OCI-LY7 (cell line): ENCODE measurements at regions of chr5 and their contacts with region 1.

Region 1: GRCh38 chr5:180470966-180471582 is 23.1 kb upstream of the CNOT6 start:
- DNase-seq: peak; percentile 62
- H3K4me3 ChIP-seq: no peak overlapping the region
- H3K27ac ChIP-seq: no peak overlapping the region
- H3K4me1 ChIP-seq: no peaks in the 10 kb centered on the region
- CTCF ChIP-seq: peak; percentile 94

Region 2: GRCh38 chr5:180201051-180201987 is 269.8 kb before region 1 on chr5:
- CTCF ChIA-PET with region 1: no interaction called
- POLR2A ChIA-PET with region 1: no interaction called
- intact Hi-C with region 1: loop called (anchors 5 kb)
- DNase-seq: peak; percentile 22
- H3K4me3 ChIP-seq: no peak overlapping the region
- H3K27ac ChIP-seq: no peak overlapping the region
- H3K4me1 ChIP-seq: no peaks in the 10 kb centered on the region
- CTCF ChIP-seq: peak; percentile 74

Region 3: DNA sequence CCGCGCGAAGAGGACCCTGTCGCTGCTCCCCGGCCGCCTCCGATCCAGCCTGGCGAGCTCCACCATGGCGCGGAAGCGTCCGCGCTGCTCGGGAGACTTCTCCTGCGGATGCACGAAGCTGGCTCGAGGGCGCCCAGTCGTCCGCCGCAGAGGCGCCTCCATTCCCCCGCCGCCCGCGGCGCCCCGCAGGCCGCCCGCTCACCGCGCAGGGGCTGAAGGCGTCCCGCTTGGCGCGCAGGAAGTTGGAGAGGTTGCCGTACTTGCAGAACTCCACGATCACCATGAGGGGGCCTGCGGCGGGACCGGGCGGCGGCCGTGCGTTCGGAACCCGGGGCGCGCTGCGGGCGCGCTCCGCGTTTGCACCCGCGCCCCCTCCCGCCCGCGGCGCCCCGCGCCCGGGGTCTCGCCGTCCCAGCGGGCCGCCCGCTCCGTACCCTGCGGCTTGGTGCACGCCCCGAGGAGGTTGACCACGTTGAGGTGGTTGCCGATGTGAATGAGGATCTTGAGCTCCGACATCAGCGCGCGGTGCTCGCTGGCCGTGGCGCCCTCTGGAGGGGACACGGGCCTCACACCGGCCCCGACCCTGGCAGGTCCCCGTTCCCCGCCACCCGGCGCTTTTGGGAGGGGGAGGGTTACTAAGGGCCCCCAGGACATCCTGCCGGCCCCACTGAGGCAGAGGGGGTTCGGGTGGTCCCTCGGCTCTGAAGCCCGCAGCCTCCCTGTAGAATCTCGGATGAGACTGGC is 147.9 kb after region 1 on chr5:
- CTCF ChIA-PET with region 1: no interaction called
- POLR2A ChIA-PET with region 1: no interaction called
- intact Hi-C with region 1: no loop called
- DNase-seq: no peak
- H3K4me3 ChIP-seq: no peak overlapping the region
- H3K27ac ChIP-seq: no peak overlapping the region
- H3K4me1 ChIP-seq: peaks cover 6% of the 10 kb centered on the region
- CTCF ChIP-seq: no peak

Region 4: GRCh38 chr5:181043285-181044092 is 572.4 kb after region 1 on chr5:
- CTCF ChIA-PET with region 1: no interaction called
- POLR2A ChIA-PET with region 1: no interaction called
- intact Hi-C with region 1: no loop called
- DNase-seq: peak; percentile 67
- H3K4me3 ChIP-seq: peak overlapping the region; percentile 64
- H3K27ac ChIP-seq: peak overlapping the region; percentile 84
- H3K4me1 ChIP-seq: peaks cover 53% of the 10 kb centered on the region
- CTCF ChIP-seq: peak; percentile 75